Sigmoid colon (tissue), 7 donors: ENCODE measurements at regions of chr11 and their contacts with region 1.

Region 1: DNA sequence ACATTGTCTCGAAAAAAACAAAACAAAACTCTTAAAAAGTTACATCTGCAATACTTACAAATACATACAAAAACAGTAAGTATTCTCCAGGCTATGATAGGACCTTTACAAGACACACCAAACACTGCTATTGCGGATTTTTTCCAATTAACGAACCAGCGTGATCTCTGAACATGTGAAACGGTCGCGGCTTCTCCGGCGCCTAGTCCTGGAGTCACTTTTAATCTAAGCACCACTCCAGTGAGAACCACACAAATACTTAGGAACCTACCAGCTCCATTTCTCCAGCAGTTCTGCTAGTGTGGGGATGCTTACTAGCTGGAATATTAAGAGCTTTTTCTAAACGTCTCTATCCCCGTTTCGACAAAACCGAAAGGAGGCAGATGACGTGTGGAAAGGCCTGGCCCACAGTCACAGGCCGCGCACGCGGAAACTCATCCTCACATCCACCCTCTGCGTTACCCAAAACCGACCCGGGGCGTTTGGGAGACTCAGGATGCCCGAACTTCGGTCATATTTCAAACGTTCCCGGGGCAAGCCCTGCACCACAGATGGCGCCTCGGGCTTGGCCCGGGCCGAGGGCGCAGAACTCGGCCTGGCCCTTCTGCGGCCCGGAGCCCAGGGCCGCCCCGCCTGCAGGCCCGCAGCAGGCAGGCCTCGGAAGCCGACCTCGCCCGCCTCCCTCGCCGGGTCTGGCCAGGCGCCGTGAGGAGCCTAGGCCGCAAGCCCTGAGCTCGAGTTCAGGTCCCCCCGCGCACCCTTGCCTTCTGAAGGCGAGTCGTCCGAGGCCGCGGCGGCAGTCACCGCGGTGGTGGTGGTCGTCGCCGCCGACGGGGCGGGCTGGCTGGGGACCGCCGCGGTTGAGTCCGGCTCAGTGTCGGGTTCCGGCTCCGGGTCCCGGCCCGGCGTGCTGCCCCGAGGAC is 575 bp downstream of the FNBP4 start:
- DNase-seq: peak; percentile 87
- H3K4me3 ChIP-seq: peak overlapping the region; percentile 54 to 97 (median 86)
- H3K27ac ChIP-seq: peak overlapping the region; percentile 98 to 100 (median 99)
- H3K4me1 ChIP-seq: peaks cover 0 to 33% (median 27%) of the 10 kb centered on the region in 4 donors
- H3K27me3 ChIP-seq: no peaks in the 10 kb centered on the region
- CTCF ChIP-seq: no peak
- EP300 ChIP-seq: no peak
- POLR2A ChIP-seq: no peak

Region 2: DNA sequence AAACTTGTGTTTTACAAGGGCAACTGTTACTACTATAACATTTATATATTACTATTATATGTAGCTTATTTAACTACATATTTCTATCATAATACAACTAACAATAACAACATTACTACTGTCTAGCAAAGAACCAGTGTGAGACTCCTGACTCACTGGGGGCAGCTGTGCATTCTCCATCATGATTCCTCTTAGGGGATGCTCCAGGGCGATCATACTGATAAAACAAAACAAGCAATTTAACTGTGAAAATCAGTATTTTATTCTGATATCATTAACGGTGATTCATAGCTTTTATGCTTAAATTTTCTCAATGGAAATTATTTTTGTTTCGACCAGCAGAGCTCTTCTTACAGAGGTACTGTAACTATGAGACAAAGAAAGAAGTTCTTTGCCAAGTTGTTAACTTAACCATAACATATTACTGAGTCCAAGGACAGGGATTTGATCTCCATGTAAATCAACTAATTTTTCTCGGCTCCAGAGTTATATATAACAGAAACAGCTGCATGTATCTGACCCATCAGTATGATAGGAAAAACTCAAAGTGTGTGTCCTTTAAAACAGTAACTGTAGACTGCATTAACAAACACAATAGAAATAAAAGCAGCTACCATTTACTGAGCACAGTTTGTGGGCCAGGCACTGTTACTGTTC is 25.3 kb after region 1 on chr11:
- intact Hi-C with region 1: loop called (anchors 2 kb)
- DNase-seq: no peak
- H3K4me3 ChIP-seq: no peak overlapping the region
- H3K27ac ChIP-seq: peak overlapping the region; percentile 58 to 78 (median 68)
- H3K4me1 ChIP-seq: peaks cover 0 to 27% (median 25%) of the 10 kb centered on the region in 4 donors
- H3K27me3 ChIP-seq: no peaks in the 10 kb centered on the region
- CTCF ChIP-seq: no peak
- EP300 ChIP-seq: no peak
- POLR2A ChIP-seq: no peak

Region 3: GRCh38 chr11:47847892-47848635 is 81.5 kb after region 1 on chr11 and contains the start of gene NUP160:
- intact Hi-C with region 1: loop called (anchors 2 kb)
- DNase-seq: peak; percentile 90
- H3K4me3 ChIP-seq: peak within 1 kb of the TSS; percentile 68 to 93 (median 82)
- H3K27ac ChIP-seq: peak within 1 kb of the TSS; percentile 82 to 95 (median 90)
- H3K4me1 ChIP-seq: peaks cover 0 to 29% (median 14%) of the 10 kb centered on the region in 4 donors
- H3K27me3 ChIP-seq: no peaks in the 10 kb centered on the region
- CTCF ChIP-seq: no peak
- EP300 ChIP-seq: no peak
- POLR2A ChIP-seq: peak; percentile 45 to 66
- total RNA-seq, gene NUP160: 15.7 to 23.2 (median 20.8) TPM